Motor neuron (in vitro differentiated cells): ENCODE measurements at regions of chr10 and their contacts with region 1.

Region 1: GRCh38 chr10:110137142-110137545 is 70.3 kb upstream of the MXI1 start:
- ATAC-seq: peak; percentile 38 to 69 (median 52)
- H3K4me3 ChIP-seq: no peak overlapping the region
- H3K27ac ChIP-seq: no peak overlapping the region
- H3K4me1 ChIP-seq: peaks cover 2% of the 10 kb centered on the region in 2 donors

Region 2: GRCh38 chr10:109883859-109884771 is 253.0 kb before region 1 on chr10:
- in situ Hi-C with region 1: loop called in 2 of 9 experiments (anchors 10 to 25 kb)
- ATAC-seq: peak; percentile 89 to 97 (median 94)
- H3K4me3 ChIP-seq: no peak overlapping the region
- H3K27ac ChIP-seq: peak overlapping the region in 1 of 2 donors; percentile 60
- H3K4me1 ChIP-seq: peaks cover 5 to 7% of the 10 kb centered on the region in 2 donors

Region 3: DNA sequence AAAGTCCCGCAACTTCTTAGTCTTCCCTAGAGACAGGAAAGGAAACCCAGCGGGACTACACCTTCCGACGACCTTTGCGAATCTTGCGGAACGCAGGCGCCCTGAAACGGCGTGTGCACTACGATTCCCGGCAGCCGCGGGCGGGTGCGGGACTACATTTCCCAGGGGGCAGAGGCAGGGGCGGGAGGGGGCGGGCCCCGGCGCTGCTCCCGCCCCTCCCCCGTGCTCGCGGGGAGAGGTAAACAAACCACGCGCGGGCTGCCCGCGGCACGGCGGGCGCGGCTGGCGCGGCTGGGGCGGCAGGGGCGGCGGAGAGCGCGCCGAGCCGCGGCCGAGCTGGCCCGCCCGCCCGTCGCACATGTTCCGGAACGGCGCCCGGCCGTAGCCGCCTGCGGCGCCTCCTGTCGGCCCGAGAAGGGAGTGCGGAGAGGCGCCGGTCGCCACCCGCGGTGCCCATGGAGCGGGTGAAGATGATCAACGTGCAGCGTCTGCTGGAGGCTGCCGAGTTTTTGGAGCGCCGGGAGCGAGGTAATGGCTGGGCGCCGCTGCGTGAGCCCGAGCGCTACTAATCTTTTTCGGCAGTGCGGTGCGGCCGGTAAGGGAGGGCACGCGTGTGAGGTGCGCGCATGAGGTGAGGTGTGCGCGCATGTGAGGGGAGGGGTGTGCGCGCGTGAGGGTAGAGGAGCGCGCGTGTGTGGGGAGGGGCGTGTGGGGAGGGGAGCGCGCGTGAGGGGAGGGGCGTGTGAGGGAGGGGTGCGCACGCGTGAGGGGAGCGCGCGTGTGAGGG is 88.8 kb after region 1 on chr10:
- in situ Hi-C with region 1: loop called in 1 of 9 experiments (anchors 10 kb)
- ATAC-seq: peak; percentile 65 to 80 (median 68)
- H3K4me3 ChIP-seq: peak overlapping the region; percentile 43 to 69 (median 63)
- H3K27ac ChIP-seq: peak overlapping the region; percentile 5 to 68
- H3K4me1 ChIP-seq: peaks cover 17 to 20% of the 10 kb centered on the region in 2 donors

Region 4: GRCh38 chr10:110273474-110273873 is 136.3 kb after region 1 on chr10:
- in situ Hi-C with region 1: loop called in 5 of 9 experiments (anchors 10 to 25 kb)
- ATAC-seq: peak in 1 of 8 experiments; percentile 18
- H3K4me3 ChIP-seq: no peak overlapping the region
- H3K27ac ChIP-seq: no peak overlapping the region
- H3K4me1 ChIP-seq: peaks cover 9 to 13% of the 10 kb centered on the region in 2 donors

Region 5: GRCh38 chr10:110279407-110279986 is 142.4 kb after region 1 on chr10:
- in situ Hi-C with region 1: loop called in 8 of 9 experiments (anchors 10 to 25 kb)
- ATAC-seq: peak in 5 of 8 experiments; percentile 47 to 80 (median 74)
- H3K4me3 ChIP-seq: no peak overlapping the region
- H3K27ac ChIP-seq: no peak overlapping the region
- H3K4me1 ChIP-seq: peaks cover 5 to 14% of the 10 kb centered on the region in 2 donors

Region 6: GRCh38 chr10:110285501-110285900 is 148.4 kb after region 1 on chr10:
- in situ Hi-C with region 1: loop called in 6 of 9 experiments (anchors 10 to 25 kb)
- ATAC-seq: peak in 3 of 8 experiments; percentile 9 to 40 (median 24)
- H3K4me3 ChIP-seq: no peak overlapping the region
- H3K27ac ChIP-seq: no peak overlapping the region
- H3K4me1 ChIP-seq: no peaks in the 10 kb centered on the region

Region 7: DNA sequence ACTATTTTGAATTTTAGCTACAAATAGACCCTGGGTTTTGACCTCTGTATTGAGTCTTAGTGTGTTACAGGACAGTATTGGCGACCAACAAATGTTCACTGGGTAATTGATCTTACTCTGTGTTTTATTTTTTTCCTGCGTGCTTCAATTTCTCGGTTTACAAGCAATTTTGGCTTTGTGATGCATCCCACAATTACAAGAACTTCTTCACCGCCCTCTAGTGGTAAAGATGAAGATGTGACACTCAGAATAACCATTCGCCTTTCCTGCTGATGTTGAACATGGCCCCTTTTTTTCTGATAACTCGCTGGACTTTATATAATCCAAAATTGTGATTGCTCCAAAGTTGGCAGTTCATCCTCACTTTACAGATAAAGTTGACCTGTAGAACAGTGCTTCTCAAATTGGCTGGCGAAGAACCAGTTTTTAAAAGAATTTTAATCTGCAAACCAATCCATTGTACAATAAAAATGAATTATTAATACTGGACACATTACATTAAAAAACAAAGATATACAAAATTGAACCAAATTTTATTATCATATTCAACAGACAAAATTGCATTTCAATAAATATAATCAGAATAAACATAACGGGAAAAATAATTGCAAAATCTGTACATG is 410.1 kb after region 1 on chr10:
- in situ Hi-C with region 1: loop called in 1 of 9 experiments (anchors 25 kb)
- ATAC-seq: peak; percentile 26 to 75 (median 54)
- H3K4me3 ChIP-seq: no peak overlapping the region
- H3K27ac ChIP-seq: no peak overlapping the region
- H3K4me1 ChIP-seq: peaks cover 0 to 5% of the 10 kb centered on the region in 2 donors

Region 8: DNA sequence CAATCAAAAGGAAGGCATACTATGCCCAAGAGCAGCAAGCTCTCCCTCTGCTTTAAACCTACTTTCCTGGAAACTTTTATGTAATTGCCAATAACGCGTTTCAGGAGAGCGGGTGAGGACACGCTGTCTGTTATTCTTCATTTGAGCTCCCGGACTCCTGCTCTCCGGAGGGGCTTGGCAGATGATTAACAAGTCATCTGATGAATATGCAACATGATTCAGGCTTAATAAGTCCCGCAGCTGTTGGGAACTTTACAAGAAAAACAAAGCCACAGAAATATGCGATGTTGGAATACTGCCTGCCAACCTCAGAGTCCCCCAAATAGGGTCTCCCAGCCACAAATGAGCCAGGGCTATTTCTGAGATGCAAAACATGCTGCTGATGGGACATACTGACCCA is 1698.4 kb after region 1 on chr10:
- in situ Hi-C with region 1: no loop called
- ATAC-seq: peak in 3 of 8 experiments; percentile 71 to 92 (median 78)
- H3K4me3 ChIP-seq: no peak overlapping the region
- H3K27ac ChIP-seq: no peak overlapping the region
- H3K4me1 ChIP-seq: peaks cover under 1 to 8% of the 10 kb centered on the region in 2 donors